ENCODE measurements at regions of chr2 and their contacts with region 1.

Region 1: GRCh38 chr2:212777020-212777491 is 238.5 kb upstream of the ERBB4 start:
- DNase-seq: no peak

Region 2: GRCh38 chr2:213151437-213152064 is 374.5 kb after region 1 on chr2 and contains the start of gene IKZF2:
- intact Hi-C with region 1: loop called in 1 of 2 experiments (anchors 5 kb)
- DNase-seq: peak; percentile 95
- total RNA-seq, gene IKZF2: 7.3 to 8.8 TPM

Region 3: DNA sequence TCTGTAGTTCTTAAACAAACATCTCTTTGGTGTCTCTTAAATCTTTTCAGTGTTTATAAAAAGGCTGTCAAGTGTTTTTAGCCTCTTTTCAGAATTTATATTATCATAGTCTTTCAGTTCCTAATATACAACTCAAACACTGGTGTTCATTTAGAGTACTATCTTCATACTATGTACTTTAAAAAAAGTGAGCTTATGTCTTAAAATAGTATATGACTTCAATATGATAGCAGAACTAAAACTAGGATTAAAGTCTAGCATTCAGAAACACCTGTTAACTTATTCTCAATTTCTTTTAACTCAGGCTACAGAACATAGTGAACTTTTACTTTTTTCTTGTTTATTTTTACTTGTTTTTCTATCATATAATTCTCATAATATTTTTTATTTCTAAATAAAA is 389.1 kb after region 1 on chr2:
- intact Hi-C with region 1: loop called in 1 of 2 experiments (anchors 10 kb)
- DNase-seq: no peak